Lower leg skin (tissue), 4 donors: ENCODE measurements at regions of chr13 and their contacts with region 1.

Region 1: GRCh38 chr13:94128430-94128829 is 351.1 kb downstream of the DCT start:
- DNase-seq: peak in 1 of 2 donors; percentile 44
- H3K4me3 ChIP-seq: no peak overlapping the region
- CTCF ChIP-seq: no peak
- POLR2A ChIP-seq: no peak

Region 2: GRCh38 chr13:93740281-93740710 is 388.1 kb before region 1 on chr13:
- intact Hi-C with region 1: loop called (anchors 5 kb)
- DNase-seq: no peak
- H3K4me3 ChIP-seq: no peak overlapping the region
- CTCF ChIP-seq: no peak
- POLR2A ChIP-seq: no peak